B cell (primary cell): ENCODE measurements at regions of chr1 and their contacts with region 1.

Region 1: GRCh38 chr1:169367486-169368405 is at the starts of genes BLZF1 and NME7:
- DNase-seq: peak; percentile 97
- ATAC-seq: peak; percentile 99
- H3K4me3 ChIP-seq: peak within 1 kb of the TSS; percentile 66 to 100 (median 92)
- H3K4me3 Mint-ChIP-seq: peak within 1 kb of the TSS; percentile 42
- H3K27ac ChIP-seq: peak within 1 kb of the TSS; percentile 66 to 86
- H3K27ac Mint-ChIP-seq: no peak within 1 kb of the TSS
- H3K4me1 ChIP-seq: peaks cover 6 to 12% of the 10 kb centered on the region in 2 donors
- H3K4me1 Mint-ChIP-seq: peaks cover 12% of the 10 kb centered on the region
- H3K27me3 ChIP-seq: no peaks in the 10 kb centered on the region
- H3K27me3 Mint-ChIP-seq: no peaks in the 10 kb centered on the region
- CTCF ChIP-seq: no peak
- total RNA-seq, gene BLZF1: 20.1 and 21.3 TPM in 2 replicates
- total RNA-seq, gene NME7: 13.1 and 14.3 TPM in 2 replicates

Region 2: GRCh38 chr1:167936068-167936929 is 1431.4 kb before region 1 on chr1 and contains the start of gene DCAF6:
- CTCF ChIA-PET with region 1: interaction called, 3 read pairs
- POLR2A ChIA-PET with region 1: no interaction called
- intact Hi-C with region 1: loop called (anchors 5 kb)
- DNase-seq: peak; percentile 99
- ATAC-seq: peak; percentile 78
- H3K4me3 ChIP-seq: peak within 1 kb of the TSS; percentile 79 to 96 (median 94)
- H3K4me3 Mint-ChIP-seq: peak within 1 kb of the TSS; percentile 95
- H3K27ac ChIP-seq: peak within 1 kb of the TSS; percentile 87 to 95
- H3K27ac Mint-ChIP-seq: peak within 1 kb of the TSS; percentile 100
- H3K4me1 ChIP-seq: peaks cover 10 to 27% of the 10 kb centered on the region in 2 donors
- H3K4me1 Mint-ChIP-seq: peaks cover 35% of the 10 kb centered on the region
- H3K27me3 ChIP-seq: no peaks in the 10 kb centered on the region
- H3K27me3 Mint-ChIP-seq: no peaks in the 10 kb centered on the region
- CTCF ChIP-seq: no peak
- total RNA-seq, gene DCAF6: 40.0 and 40.4 TPM in 2 replicates

Region 3: DNA sequence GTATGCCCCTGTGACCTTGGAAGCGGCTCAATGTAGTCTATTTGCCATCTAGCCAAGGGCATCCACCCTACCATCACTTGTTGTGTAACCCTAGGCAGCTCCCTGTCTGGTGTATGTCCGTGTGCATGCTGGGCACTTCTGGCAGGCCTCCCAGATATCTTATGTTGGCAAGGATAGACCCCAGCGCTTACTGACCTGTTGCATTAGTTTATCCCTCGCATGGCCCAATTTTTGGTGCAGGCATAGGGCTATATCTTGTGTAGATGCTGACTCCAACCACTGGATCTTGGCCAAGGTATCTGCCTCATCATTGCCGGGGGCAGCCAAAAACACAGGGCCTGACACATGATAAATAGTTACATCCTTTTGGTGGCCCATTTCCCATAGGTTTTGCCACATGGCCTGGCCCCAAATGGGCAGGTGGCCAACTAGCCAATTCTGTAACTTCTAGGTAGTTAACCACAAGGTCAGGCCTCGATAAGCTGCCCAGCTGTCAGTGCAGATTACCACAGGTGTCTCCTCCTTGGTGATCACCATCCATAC is 1101.0 kb before region 1 on chr1:
- CTCF ChIA-PET with region 1: no interaction called
- POLR2A ChIA-PET with region 1: no interaction called
- intact Hi-C with region 1: no loop called
- DNase-seq: no peak
- ATAC-seq: no peak
- H3K4me3 ChIP-seq: no peak overlapping the region
- H3K4me3 Mint-ChIP-seq: no peak overlapping the region
- H3K27ac ChIP-seq: no peak overlapping the region
- H3K27ac Mint-ChIP-seq: no peak overlapping the region
- H3K4me1 ChIP-seq: no peaks in the 10 kb centered on the region
- H3K4me1 Mint-ChIP-seq: no peaks in the 10 kb centered on the region
- H3K27me3 ChIP-seq: no peaks in the 10 kb centered on the region
- H3K27me3 Mint-ChIP-seq: no peaks in the 10 kb centered on the region
- CTCF ChIP-seq: no peak

Region 4: GRCh38 chr1:168342572-168343280 is 1025.0 kb before region 1 on chr1:
- CTCF ChIA-PET with region 1: interaction called, 7 read pairs
- POLR2A ChIA-PET with region 1: no interaction called
- intact Hi-C with region 1: loop called (anchors 5 kb)
- DNase-seq: peak; percentile 89
- ATAC-seq: peak; percentile 100
- H3K4me3 ChIP-seq: no peak overlapping the region
- H3K4me3 Mint-ChIP-seq: peak overlapping the region; percentile 48
- H3K27ac ChIP-seq: no peak overlapping the region
- H3K27ac Mint-ChIP-seq: peak overlapping the region; percentile 57
- H3K4me1 ChIP-seq: peaks cover 3 to 7% of the 10 kb centered on the region in 2 donors
- H3K4me1 Mint-ChIP-seq: peaks cover 6% of the 10 kb centered on the region
- H3K27me3 ChIP-seq: no peaks in the 10 kb centered on the region
- H3K27me3 Mint-ChIP-seq: peaks cover 5% of the 10 kb centered on the region
- CTCF ChIP-seq: peak; percentile 87

Region 5: DNA sequence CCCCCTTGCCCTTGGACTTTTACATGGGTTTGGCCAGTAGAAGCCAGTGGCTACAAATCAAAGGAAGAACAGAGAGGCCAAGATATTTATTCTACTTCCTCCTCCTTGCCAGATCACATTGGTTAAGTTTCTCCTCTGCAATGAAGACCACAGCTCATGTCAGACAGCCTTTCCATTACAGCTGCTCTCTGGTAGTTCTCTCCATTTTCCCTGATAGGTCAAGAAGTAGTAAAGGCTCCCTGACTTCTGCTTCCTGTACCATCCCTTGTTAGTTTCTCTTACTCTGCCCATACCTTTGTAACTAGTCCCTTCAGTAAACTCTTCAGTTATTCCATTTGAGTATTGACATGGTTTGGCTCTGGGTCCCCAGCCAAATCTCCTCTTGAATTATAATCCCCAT is 28.0 kb before region 1 on chr1:
- CTCF ChIA-PET with region 1: no interaction called
- POLR2A ChIA-PET with region 1: no interaction called
- intact Hi-C with region 1: no loop called
- DNase-seq: no peak
- ATAC-seq: no peak
- H3K4me3 ChIP-seq: no peak overlapping the region
- H3K4me3 Mint-ChIP-seq: no peak overlapping the region
- H3K27ac ChIP-seq: no peak overlapping the region
- H3K27ac Mint-ChIP-seq: no peak overlapping the region
- H3K4me1 ChIP-seq: no peaks in the 10 kb centered on the region
- H3K4me1 Mint-ChIP-seq: peaks cover 18% of the 10 kb centered on the region
- H3K27me3 ChIP-seq: no peaks in the 10 kb centered on the region
- H3K27me3 Mint-ChIP-seq: no peaks in the 10 kb centered on the region
- CTCF ChIP-seq: no peak

Region 6: DNA sequence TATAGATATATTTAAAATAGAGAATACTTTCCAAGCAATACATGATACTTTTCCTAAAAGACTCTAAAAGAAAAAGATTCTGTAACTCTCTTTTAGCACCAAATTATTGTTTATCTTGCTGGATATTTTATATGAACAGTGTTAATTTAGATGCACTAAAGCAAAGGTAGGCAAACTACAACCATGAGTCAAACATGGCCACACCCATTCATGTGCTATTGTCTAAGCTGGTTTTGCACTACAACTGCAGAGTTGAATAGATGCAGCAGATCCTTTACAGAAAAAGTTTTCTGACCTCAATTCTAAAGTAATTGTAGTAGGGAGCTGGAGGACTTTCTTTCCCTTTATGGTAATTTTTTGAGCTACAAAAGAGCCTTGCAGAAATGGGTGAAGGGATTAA is 19.6 kb after region 1 on chr1:
- CTCF ChIA-PET with region 1: no interaction called
- POLR2A ChIA-PET with region 1: no interaction called
- intact Hi-C with region 1: no loop called
- DNase-seq: no peak
- ATAC-seq: no peak
- H3K4me3 ChIP-seq: no peak overlapping the region
- H3K4me3 Mint-ChIP-seq: no peak overlapping the region
- H3K27ac ChIP-seq: no peak overlapping the region
- H3K27ac Mint-ChIP-seq: no peak overlapping the region
- H3K4me1 ChIP-seq: no peaks in the 10 kb centered on the region
- H3K4me1 Mint-ChIP-seq: no peaks in the 10 kb centered on the region
- H3K27me3 ChIP-seq: no peaks in the 10 kb centered on the region
- H3K27me3 Mint-ChIP-seq: no peaks in the 10 kb centered on the region
- CTCF ChIP-seq: no peak

Region 7: GRCh38 chr1:169485544-169486278 is 118.0 kb after region 1 on chr1 and contains the start of gene SLC19A2:
- CTCF ChIA-PET with region 1: no interaction called
- POLR2A ChIA-PET with region 1: no interaction called
- intact Hi-C with region 1: loop called (anchors 1 kb)
- DNase-seq: peak; percentile 96
- ATAC-seq: peak; percentile 98
- H3K4me3 ChIP-seq: peak within 1 kb of the TSS; percentile 68 to 82 (median 74)
- H3K4me3 Mint-ChIP-seq: peak within 1 kb of the TSS; percentile 94
- H3K27ac ChIP-seq: peak within 1 kb of the TSS; percentile 62 to 82
- H3K27ac Mint-ChIP-seq: peak within 1 kb of the TSS; percentile 93
- H3K4me1 ChIP-seq: peaks cover 16 to 18% of the 10 kb centered on the region in 2 donors
- H3K4me1 Mint-ChIP-seq: peaks cover 28% of the 10 kb centered on the region
- H3K27me3 ChIP-seq: peaks cover 0 to 3% (median 0%) of the 10 kb centered on the region in 4 experiments
- H3K27me3 Mint-ChIP-seq: peaks cover 4% of the 10 kb centered on the region
- CTCF ChIP-seq: peak; percentile 44
- total RNA-seq, gene SLC19A2: 3.9 TPM in 2 replicates

Region 8: DNA sequence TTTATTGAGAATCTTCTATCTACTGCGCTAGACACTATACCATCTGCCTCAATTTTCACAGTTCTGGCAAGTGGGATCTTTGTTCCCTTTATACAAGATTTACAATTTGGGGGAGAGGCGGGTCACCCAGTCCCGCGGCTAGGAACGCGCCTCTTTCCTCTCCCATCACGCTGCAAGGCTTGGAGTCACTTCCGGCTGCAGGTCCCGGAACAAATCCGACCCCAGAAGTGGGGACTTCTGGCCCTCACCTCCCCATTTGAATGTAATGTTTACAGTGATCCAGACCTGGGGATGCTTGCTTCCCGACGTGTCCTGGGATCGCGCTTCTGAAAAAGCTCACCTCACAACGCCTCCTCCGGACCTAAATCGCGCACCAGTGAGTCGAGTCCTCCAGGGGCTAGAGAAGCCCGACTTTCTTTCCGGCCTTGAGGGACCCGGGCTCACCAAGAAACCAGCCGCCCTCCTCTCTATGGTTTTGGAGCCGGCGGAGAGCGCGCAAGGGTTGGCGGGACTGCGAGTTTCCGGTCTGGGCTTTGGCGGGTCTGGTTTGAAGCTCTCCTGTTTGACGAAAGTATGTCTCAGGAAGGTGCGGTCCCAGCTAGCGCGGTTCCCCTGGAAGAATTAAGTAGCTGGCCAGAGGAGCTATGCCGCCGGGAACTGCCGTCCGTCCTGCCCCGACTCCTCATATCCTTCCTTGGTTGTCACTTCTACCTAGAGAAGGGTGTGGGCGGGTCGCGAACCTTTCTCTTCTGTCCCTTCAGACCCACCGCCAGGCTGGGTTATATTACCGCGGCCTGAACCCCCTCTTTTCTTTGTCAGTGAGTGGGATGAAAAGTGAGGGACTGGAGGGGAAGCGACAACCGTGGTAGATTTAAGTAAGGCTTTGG is 427.0 kb after region 1 on chr1 and contains the start of gene METTL18:
- CTCF ChIA-PET with region 1: interaction called, 7 read pairs
- POLR2A ChIA-PET with region 1: no interaction called
- intact Hi-C with region 1: loop called (anchors 1 kb)
- DNase-seq: peak; percentile 96
- ATAC-seq: peak; percentile 99
- H3K4me3 ChIP-seq: peak within 1 kb of the TSS; percentile 70 to 99 (median 94)
- H3K4me3 Mint-ChIP-seq: peak within 1 kb of the TSS; percentile 96
- H3K27ac ChIP-seq: peak within 1 kb of the TSS; percentile 72 to 91
- H3K27ac Mint-ChIP-seq: peak within 1 kb of the TSS; percentile 96
- H3K4me1 ChIP-seq: peaks cover 15 to 16% of the 10 kb centered on the region in 2 donors
- H3K4me1 Mint-ChIP-seq: peaks cover 45% of the 10 kb centered on the region
- H3K27me3 ChIP-seq: no peaks in the 10 kb centered on the region
- H3K27me3 Mint-ChIP-seq: no peaks in the 10 kb centered on the region
- CTCF ChIP-seq: no peak
- total RNA-seq, gene METTL18: 16.9 and 18.9 TPM in 2 replicates

Region 9: GRCh38 chr1:170531758-170532657 is 1164.3 kb after region 1 on chr1 and contains the start of gene GORAB:
- CTCF ChIA-PET with region 1: no interaction called
- POLR2A ChIA-PET with region 1: no interaction called
- intact Hi-C with region 1: loop called (anchors 2 kb)
- DNase-seq: peak; percentile 91
- ATAC-seq: peak; percentile 97
- H3K4me3 ChIP-seq: peak within 1 kb of the TSS; percentile 72 to 95 (median 89)
- H3K4me3 Mint-ChIP-seq: no peak within 1 kb of the TSS
- H3K27ac ChIP-seq: peak within 1 kb of the TSS; percentile 82 to 92
- H3K27ac Mint-ChIP-seq: no peak within 1 kb of the TSS
- H3K4me1 ChIP-seq: peaks cover 12 to 17% of the 10 kb centered on the region in 2 donors
- H3K4me1 Mint-ChIP-seq: peaks cover 13% of the 10 kb centered on the region
- H3K27me3 ChIP-seq: no peaks in the 10 kb centered on the region
- H3K27me3 Mint-ChIP-seq: no peaks in the 10 kb centered on the region
- CTCF ChIP-seq: no peak
- total RNA-seq, gene GORAB: 24.2 and 32.5 TPM in 2 replicates